ENCODE measurements at regions of chr2 and their contacts with region 1.

Region 1: GRCh38 chr2:164495491-164496223 is 125.6 kb downstream of the GRB14 start:
- ATAC-seq: peak in 6 of 8 experiments; percentile 56 to 98 (median 86)
- H3K4me3 ChIP-seq: no peak overlapping the region
- H3K27ac ChIP-seq: no peak overlapping the region
- H3K4me1 ChIP-seq: peaks cover 0 to 3% of the 10 kb centered on the region in 2 donors

Region 2: GRCh38 chr2:163155279-163155883 is 1340.3 kb before region 1 on chr2:
- in situ Hi-C with region 1: loop called in 1 of 9 experiments (anchors 25 kb)
- ATAC-seq: peak in 3 of 8 experiments; percentile 48 to 70 (median 49)
- H3K4me3 ChIP-seq: no peak overlapping the region
- H3K27ac ChIP-seq: no peak overlapping the region
- H3K4me1 ChIP-seq: no peaks in the 10 kb centered on the region

Region 3: GRCh38 chr2:164768662-164769061 is 273.0 kb after region 1 on chr2:
- in situ Hi-C with region 1: no loop called
- ATAC-seq: no peak
- H3K4me3 ChIP-seq: no peak overlapping the region
- H3K27ac ChIP-seq: no peak overlapping the region
- H3K4me1 ChIP-seq: no peaks in the 10 kb centered on the region

Measured in motor neuron (in vitro differentiated cells).